ENCODE measurements at regions of chr11 and their contacts with region 1.

Region 1: GRCh38 chr11:66386171-66387069 is 14.9 kb upstream of the SLC29A2 start:
- DNase-seq: peak; percentile 69
- CTCF ChIP-seq: peak; percentile 93

Region 2: GRCh38 chr11:66344550-66345315 is 41.7 kb before region 1 on chr11 and contains the start of gene BRMS1:
- CTCF ChIA-PET with region 1: interaction called, 15 read pairs
- POLR2A ChIA-PET with region 1: no interaction called
- DNase-seq: peak; percentile 96
- CTCF ChIP-seq: no peak

Region 3: GRCh38 chr11:66371627-66372415 is 14.6 kb before region 1 on chr11 and contains the start of gene SLC29A2:
- CTCF ChIA-PET with region 1: interaction called, 45 read pairs
- POLR2A ChIA-PET with region 1: no interaction called
- DNase-seq: peak; percentile 92
- CTCF ChIP-seq: no peak

Region 4: DNA sequence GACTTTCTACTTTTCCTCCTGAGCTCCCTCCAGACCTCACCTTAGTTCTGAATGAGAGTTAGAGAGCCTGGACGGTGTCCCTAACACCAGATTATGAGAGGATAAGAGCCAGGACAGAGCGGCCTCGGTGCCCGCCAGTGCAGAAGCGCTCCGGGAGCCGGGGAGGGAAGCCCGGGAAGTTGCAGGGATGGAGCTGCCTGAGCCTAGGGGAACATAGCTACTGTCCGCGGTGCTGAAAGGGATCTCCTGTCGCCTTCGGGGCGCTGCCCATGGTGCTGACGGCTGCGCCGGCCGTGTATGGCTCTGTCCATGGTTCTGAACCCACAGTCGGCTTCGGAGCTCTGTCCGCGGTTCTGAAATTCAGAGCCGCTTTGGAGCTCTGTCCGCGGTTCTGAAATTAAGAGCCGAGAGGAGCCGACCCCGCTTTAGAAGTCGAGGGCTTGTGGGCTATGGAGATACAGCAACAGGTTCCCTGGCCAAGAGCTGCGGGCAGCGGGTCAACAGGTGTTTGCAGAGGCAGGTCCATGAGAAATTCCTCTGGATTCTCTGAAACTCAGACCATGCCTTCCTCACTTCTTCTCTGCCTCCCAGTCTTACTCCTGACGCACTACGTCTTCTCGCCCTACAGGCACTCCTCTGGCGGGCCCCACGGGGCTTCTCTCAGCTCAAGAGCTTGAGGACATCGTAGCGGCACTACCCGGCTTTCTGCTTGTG is 35.2 kb after region 1 on chr11:
- CTCF ChIA-PET with region 1: interaction called, 10 read pairs
- POLR2A ChIA-PET with region 1: no interaction called
- DNase-seq: peak; percentile 93
- CTCF ChIP-seq: no peak

Region 5: GRCh38 chr11:66438504-66439466 is 52.4 kb after region 1 on chr11 and contains the start of gene MRPL11:
- CTCF ChIA-PET with region 1: interaction called, 15 read pairs
- POLR2A ChIA-PET with region 1: no interaction called
- DNase-seq: peak; percentile 96
- CTCF ChIP-seq: peak; percentile 74

Region 6: DNA sequence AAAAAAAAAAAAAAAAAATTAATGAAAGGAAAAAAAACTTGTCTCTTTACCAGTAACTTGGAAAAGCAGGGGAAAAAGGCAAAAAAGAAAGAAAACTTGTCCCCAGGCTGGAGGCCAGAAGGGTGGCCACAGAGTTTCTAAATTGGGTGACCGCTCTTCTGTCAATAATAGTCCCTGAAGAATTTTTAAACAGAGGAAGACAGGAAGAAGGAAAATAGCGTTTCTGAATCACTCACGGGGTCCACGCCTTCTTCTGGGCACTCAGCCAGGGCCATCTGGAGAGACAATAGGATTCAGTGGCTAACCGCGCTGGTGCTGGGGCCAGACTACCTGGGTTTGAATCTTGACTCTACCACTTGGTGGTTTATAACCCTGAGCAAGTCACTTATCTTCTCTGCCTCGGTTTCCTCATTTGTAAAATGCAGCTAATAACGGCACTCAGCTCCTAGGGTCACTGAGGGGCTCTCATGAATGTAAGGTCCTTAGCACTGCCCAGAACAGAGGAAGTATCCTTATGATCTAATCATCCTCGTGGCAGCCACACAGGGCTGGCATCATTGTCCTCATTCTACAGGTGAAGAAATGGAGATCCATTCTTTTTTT is 595.7 kb after region 1 on chr11:
- CTCF ChIA-PET with region 1: no interaction called
- POLR2A ChIA-PET with region 1: no interaction called
- DNase-seq: no peak
- CTCF ChIP-seq: no peak

Measured in GM10248 (cell line).